HEK293 (cell line): ENCODE measurements at regions of chr3 and their contacts with region 1.

Region 1: DNA sequence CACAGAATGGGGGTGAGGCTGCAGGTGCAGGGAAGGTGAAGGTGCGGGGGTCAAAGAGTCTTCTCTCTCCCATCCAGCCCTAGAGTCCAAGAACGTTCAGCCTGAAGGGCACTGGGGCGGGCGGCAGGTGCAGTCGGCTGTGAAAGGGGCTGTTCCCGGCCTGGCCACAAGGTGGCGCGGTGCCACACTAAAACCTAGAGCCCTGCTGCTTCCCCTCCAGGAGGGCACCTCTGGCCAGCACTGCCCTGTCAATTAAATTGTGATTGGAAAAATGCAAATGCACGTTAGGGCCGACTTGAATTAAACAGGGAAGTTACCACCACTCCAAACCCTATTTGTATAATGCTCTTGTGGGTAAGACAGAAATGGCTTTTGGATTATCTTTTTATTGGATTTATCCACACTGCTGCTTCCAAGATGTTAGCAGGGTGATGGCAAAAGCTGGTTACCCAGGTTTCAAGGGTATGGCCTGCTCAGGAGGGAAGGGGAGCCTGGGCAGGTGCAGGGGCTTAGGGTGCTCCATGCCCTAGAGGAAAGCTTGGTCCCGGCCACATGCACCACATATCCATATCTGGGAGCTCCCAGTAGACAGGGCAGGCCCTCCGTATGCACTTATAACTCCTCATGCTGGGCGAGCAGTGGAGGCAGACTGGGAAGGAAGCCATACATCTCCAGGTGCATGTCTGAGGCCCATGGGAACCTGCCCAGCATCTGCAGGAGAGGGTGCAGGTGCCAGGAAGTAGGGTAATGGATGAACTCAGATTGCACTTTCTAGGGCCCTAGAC is 119.8 kb downstream of the ADCY5 start:
- H3K4me3 ChIP-seq: no peak overlapping the region
- H3K27ac ChIP-seq: no peak overlapping the region
- H3K4me1 ChIP-seq: no peaks in the 10 kb centered on the region
- CTCF ChIP-seq: peak; percentile 77

Region 2: GRCh38 chr3:123489400-123490004 is 160.5 kb after region 1 on chr3:
- CTCF ChIA-PET with region 1: interaction called, 65 read pairs
- POLR2A ChIA-PET with region 1: no interaction called
- H3K4me3 ChIP-seq: no peak overlapping the region
- H3K27ac ChIP-seq: no peak overlapping the region
- H3K4me1 ChIP-seq: no peaks in the 10 kb centered on the region
- CTCF ChIP-seq: peak; percentile 38; the same call in 1 of the 2 replicates